PC-3 (cell line): ENCODE measurements at regions of chr10 and their contacts with region 1.

Region 1: GRCh38 chr10:64977915-64978314 is 1456.7 kb downstream of the REEP3 start:
- DNase-seq: peak; percentile 58
- ATAC-seq: peak; percentile 29; the same call in 1 of the 2 replicates
- H3K4me3 ChIP-seq: no peak overlapping the region
- H3K27ac ChIP-seq: no peak overlapping the region
- H3K4me1 ChIP-seq: no peaks in the 10 kb centered on the region
- H3K27me3 ChIP-seq: no peaks in the 10 kb centered on the region
- CTCF ChIP-seq: peak; percentile 60

Region 2: GRCh38 chr10:64535131-64535867 is 442.6 kb before region 1 on chr10:
- CTCF ChIA-PET with region 1: no interaction called
- POLR2A ChIA-PET with region 1: no interaction called
- intact Hi-C with region 1: loop called (anchors 5 kb)
- DNase-seq: no peak
- ATAC-seq: no peak; the same call in 1 of the 2 replicates
- H3K4me3 ChIP-seq: no peak overlapping the region
- H3K27ac ChIP-seq: no peak overlapping the region
- H3K4me1 ChIP-seq: no peaks in the 10 kb centered on the region
- H3K27me3 ChIP-seq: no peaks in the 10 kb centered on the region
- CTCF ChIP-seq: no peak

Region 3: DNA sequence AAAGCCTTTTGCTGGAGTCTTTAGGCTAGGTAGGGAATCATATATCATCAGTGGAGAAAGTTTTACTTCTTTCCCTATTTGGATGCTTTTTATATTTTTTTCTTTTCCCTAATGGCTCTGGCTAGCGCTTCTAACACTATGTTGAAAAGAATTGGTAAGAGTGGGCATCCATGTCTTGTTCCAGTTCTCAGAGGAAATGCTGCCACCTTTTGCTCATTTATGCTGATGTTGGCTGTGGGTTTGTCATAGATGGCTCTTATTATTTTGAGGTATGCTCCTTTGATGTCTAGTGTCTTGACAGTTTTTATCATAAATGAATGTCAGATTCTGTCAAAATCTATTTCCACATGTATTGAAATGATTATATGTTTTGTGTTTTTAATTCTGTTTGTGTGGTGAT is 87.4 kb after region 1 on chr10:
- CTCF ChIA-PET with region 1: no interaction called
- POLR2A ChIA-PET with region 1: no interaction called
- intact Hi-C with region 1: loop called (anchors 5 kb)
- DNase-seq: no peak
- ATAC-seq: no peak
- H3K4me3 ChIP-seq: no peak overlapping the region
- H3K27ac ChIP-seq: no peak overlapping the region
- H3K4me1 ChIP-seq: no peaks in the 10 kb centered on the region
- H3K27me3 ChIP-seq: no peaks in the 10 kb centered on the region
- CTCF ChIP-seq: 0 out of 2 replicates have a peak, but pooled peaks have one; percentile 20

Region 4: GRCh38 chr10:65358565-65358964 is 380.6 kb after region 1 on chr10:
- CTCF ChIA-PET with region 1: interaction called, 4 read pairs
- POLR2A ChIA-PET with region 1: no interaction called
- intact Hi-C with region 1: loop called (anchors 2 kb)
- DNase-seq: peak; percentile 76
- ATAC-seq: peak; percentile 94
- H3K4me3 ChIP-seq: no peak overlapping the region
- H3K27ac ChIP-seq: no peak overlapping the region
- H3K4me1 ChIP-seq: no peaks in the 10 kb centered on the region
- H3K27me3 ChIP-seq: no peaks in the 10 kb centered on the region
- CTCF ChIP-seq: peak; percentile 96

Region 5: DNA sequence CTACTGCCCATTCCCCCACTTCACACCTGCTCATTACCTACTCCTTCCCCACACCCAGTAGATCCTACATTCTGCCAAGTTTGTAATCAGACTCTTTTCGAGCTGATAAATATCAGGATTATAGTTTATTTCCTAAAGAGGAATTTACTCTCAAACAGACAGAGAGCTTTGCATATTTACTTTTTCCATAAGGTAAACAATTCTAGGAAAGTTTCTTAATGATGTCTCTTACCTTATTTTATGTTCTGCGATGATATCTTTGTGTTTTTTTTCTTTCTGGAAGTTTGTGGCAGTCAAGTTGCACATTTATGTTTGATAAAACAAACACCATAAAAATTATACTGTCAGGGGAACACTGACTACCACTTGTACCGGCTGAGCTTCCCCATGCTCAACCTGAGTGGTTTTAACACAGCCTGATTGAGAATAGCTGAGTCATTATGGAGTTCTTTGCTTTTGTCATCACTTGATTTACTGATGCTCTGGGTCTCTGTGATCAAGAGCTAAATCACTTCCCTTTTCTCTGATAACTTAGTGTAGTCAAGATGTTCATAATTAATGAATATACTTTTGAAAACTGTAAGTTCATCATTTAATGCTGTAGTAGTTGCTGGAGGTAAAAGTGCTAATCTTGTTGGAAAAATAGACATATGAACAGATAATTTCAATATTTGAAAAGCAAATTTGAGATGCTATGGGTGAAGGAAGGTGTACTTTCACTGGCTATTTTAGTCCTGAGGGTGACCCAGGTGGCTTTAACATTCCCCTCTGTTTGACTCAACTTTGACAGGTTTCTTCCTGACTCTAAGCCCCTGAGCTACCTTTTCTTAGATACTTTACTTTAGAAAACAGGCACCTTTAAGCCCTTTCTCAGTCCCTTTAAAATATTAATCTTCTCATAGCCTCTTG is 913.4 kb after region 1 on chr10:
- CTCF ChIA-PET with region 1: no interaction called
- POLR2A ChIA-PET with region 1: no interaction called
- intact Hi-C with region 1: loop called (anchors 1 kb)
- DNase-seq: peak; percentile 90
- ATAC-seq: peak; percentile 98
- H3K4me3 ChIP-seq: peak overlapping the region; percentile 6; the same call in 1 of the 2 replicates
- H3K27ac ChIP-seq: peak overlapping the region; percentile 74
- H3K4me1 ChIP-seq: peaks cover 21% of the 10 kb centered on the region
- H3K27me3 ChIP-seq: no peaks in the 10 kb centered on the region
- CTCF ChIP-seq: no peak

Region 6: DNA sequence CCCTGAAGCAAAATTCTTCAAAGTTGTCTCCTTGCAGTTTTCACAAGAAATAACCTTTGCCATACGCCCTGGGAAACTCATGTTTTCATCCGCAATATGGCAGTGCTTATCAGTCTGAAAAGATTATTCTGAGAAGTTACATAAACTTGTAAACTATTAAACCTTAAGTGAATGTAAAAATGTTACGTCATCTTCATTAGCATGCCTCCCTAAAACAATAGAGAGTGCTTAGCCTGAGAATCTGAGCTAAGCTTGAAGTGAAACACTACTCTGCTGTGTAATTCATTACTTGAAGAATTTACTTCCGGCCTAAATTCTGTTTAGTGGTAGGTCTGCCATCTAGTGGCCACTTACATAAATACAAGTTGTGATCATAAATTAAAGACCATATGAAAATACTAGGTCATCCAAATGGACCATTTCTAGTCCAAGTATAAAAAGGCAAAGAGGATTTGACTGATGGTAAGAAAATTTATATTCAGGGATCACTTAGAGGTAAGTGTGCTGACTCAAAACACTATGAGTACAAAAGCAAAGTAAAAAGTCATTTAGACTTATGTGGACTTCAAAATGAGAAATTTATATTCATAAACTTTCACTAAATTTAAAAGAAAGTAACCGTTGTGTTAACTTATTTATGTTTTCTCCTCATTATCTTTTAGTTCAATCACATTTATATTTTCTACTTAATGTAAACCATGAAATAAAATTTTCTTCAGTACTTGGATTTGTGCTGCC is 1202.8 kb after region 1 on chr10:
- CTCF ChIA-PET with region 1: no interaction called
- POLR2A ChIA-PET with region 1: no interaction called
- intact Hi-C with region 1: loop called (anchors 1 kb)
- DNase-seq: peak; percentile 93
- ATAC-seq: peak; percentile 74
- H3K4me3 ChIP-seq: no peak overlapping the region
- H3K27ac ChIP-seq: no peak overlapping the region
- H3K4me1 ChIP-seq: no peaks in the 10 kb centered on the region
- H3K27me3 ChIP-seq: no peaks in the 10 kb centered on the region
- CTCF ChIP-seq: peak; percentile 95